ENCODE measurements at regions of chr4 and their contacts with region 1.

Region 1: GRCh38 chr4:128596115-128596514 is 213.4 kb upstream of the JADE1 start:
- DNase-seq: no peak
- H3K4me3 ChIP-seq: no peak overlapping the region
- H3K27ac ChIP-seq: peak overlapping the region; percentile 20; the same call in 1 of the 2 replicates
- H3K4me1 ChIP-seq: peaks cover 19% of the 10 kb centered on the region
- H3K27me3 ChIP-seq: no peaks in the 10 kb centered on the region
- CTCF ChIP-seq: no peak

Region 2: GRCh38 chr4:128267745-128268144 is 328.4 kb before region 1 on chr4:
- CTCF ChIA-PET with region 1: no interaction called
- POLR2A ChIA-PET with region 1: no interaction called
- intact Hi-C with region 1: no loop called
- DNase-seq: no peak
- H3K4me3 ChIP-seq: no peak overlapping the region
- H3K27ac ChIP-seq: no peak overlapping the region
- H3K4me1 ChIP-seq: no peaks in the 10 kb centered on the region
- H3K27me3 ChIP-seq: no peaks in the 10 kb centered on the region
- CTCF ChIP-seq: no peak

Region 3: DNA sequence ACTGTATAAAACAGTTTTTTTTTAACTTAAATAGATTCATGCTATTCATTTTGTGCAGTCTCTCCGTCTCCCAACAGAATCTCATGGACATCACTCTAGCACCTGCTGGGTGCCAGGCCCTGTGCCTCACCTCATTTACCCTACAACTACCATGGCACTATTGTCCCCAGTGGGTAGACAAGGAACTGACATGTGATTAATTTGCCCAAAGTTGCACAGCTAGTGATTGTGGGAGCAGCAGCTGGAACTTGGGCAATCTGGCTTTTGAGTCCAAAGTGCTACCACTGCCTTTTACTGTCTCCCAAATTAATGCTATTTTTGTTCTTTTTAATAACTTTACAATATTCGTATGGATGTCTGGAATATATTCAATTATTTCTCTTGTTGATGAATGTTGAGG is 297.3 kb before region 1 on chr4:
- CTCF ChIA-PET with region 1: no interaction called
- POLR2A ChIA-PET with region 1: no interaction called
- intact Hi-C with region 1: no loop called
- DNase-seq: no peak
- H3K4me3 ChIP-seq: no peak overlapping the region
- H3K27ac ChIP-seq: no peak overlapping the region
- H3K4me1 ChIP-seq: no peaks in the 10 kb centered on the region
- H3K27me3 ChIP-seq: no peaks in the 10 kb centered on the region
- CTCF ChIP-seq: no peak

Region 4: DNA sequence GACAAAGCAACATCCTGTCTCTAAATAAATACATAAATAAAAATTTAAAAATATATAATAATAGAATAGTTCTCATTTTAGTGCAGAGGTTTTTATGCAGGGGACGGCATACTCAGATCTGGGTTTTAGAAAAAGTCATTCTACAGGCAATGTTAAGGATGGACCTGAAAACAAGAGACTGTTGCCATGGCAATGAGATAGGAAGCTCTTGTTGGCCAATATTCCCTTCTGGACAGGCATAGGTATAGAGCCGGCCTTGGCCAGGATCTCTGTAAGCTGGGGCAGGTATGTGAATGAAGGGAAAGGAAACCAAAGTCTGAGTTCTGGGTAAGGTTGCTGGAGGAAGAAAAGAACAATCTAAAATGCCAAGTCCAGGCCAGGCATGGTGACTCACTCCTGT is 26.0 kb after region 1 on chr4:
- CTCF ChIA-PET with region 1: no interaction called
- POLR2A ChIA-PET with region 1: interaction called, 10 read pairs
- intact Hi-C with region 1: no loop called
- DNase-seq: no peak
- H3K4me3 ChIP-seq: no peak overlapping the region
- H3K27ac ChIP-seq: no peak overlapping the region
- H3K4me1 ChIP-seq: no peaks in the 10 kb centered on the region
- H3K27me3 ChIP-seq: no peaks in the 10 kb centered on the region
- CTCF ChIP-seq: no peak